AG04450 (cell line): ENCODE measurements at regions of chr6 and their contacts with region 1.

Region 1: DNA sequence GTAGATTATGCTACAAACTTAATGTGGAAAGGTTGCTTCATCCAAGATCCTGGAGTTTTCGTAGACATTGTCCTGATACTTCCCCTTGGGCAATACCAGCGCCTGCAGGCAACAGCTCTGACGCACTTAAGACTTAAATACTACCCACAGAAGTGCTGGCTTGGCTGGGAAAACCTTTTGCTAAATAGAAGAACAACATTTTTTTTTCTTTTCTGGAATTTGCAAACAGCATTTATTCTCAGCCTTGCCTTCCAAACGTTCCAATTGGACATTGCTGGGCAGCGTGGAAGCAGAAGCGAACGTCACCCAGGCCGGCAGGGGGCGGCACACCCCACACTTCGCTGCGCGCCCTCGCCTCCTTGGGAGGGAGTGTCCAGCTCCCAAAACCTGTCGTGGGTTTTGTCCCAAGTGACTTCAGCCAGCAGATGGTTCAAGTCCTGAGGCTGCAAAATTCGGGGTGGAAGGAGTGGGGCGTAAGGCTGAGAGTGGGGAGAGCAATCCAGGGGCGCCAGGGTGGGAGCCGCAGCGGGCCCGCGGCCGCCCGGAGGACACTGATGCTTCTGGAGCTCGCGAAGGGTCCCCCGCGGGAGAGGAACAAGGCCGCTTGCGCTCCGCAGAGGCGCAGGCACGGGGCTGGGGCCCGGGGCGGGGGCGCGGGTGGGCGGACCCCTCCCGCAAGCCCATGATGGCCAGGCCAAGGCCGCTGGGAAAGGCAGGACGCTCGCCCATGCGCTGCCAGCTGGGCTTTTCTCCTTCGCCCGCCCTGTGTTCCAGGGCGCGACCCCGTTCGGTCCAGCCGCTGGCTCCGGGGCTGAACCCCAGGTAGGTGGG is 60.8 kb upstream of the MAP3K4 start:
- DNase-seq: peak; percentile 52
- H3K4me3 ChIP-seq: peak overlapping the region; percentile 54
- H3K27ac ChIP-seq: no peak overlapping the region
- H3K27me3 ChIP-seq: no peaks in the 10 kb centered on the region
- CTCF ChIP-seq: peak; percentile 82

Region 2: DNA sequence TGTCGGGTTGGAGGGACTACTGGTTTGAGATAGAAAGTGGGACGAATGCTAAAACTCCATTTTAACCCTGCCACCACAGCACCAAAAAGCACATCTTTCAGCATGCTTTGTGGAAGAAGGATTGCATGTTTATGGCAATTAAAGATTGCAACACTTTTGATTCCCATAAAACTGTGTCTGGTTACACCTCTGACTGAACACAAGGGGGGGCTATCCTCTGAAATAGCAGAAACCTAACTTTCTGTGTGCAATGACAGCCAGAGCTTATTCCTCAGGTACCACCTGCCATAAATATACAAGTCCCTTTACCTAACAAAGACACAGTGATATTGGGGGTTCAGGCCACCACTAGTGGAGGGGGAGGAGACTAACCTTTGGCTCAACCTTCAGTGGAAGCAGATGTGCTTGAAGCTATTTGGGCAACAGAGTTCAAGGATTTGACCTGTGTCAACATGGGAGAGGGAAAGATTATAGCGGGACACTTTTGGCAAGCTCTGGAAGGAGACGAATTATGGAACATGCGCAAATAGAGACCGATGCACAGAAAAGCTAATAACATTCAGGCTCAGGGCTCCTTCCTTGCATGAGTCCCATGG is 238.3 kb before region 1 on chr6:
- CTCF ChIA-PET with region 1: no interaction called
- POLR2A ChIA-PET with region 1: no interaction called
- DNase-seq: no peak
- H3K4me3 ChIP-seq: no peak overlapping the region
- H3K27ac ChIP-seq: no peak overlapping the region
- H3K27me3 ChIP-seq: no peaks in the 10 kb centered on the region
- CTCF ChIP-seq: no peak

Region 3: DNA sequence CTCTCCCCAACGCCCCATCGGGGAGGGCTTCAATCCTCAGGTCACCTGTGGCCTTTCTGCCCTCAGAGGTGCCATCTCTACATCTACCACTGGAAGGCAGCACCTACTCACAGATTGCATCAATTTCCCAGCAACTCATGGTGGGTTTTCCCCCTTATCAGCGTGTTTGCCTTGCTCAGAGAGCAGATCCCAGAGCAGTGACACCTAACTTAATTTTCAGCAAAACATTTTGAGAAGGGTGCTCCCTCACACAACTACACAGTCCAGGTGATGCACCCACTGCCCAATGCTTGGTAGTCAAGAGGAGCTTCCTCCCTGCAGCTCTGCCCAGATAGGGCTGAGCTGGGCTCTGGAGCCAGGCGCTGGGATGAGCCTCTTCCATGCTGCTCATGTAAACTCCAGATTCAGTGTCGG is 180.5 kb before region 1 on chr6:
- CTCF ChIA-PET with region 1: no interaction called
- POLR2A ChIA-PET with region 1: no interaction called
- DNase-seq: no peak
- H3K4me3 ChIP-seq: no peak overlapping the region
- H3K27ac ChIP-seq: no peak overlapping the region
- H3K27me3 ChIP-seq: no peaks in the 10 kb centered on the region
- CTCF ChIP-seq: no peak

Region 4: DNA sequence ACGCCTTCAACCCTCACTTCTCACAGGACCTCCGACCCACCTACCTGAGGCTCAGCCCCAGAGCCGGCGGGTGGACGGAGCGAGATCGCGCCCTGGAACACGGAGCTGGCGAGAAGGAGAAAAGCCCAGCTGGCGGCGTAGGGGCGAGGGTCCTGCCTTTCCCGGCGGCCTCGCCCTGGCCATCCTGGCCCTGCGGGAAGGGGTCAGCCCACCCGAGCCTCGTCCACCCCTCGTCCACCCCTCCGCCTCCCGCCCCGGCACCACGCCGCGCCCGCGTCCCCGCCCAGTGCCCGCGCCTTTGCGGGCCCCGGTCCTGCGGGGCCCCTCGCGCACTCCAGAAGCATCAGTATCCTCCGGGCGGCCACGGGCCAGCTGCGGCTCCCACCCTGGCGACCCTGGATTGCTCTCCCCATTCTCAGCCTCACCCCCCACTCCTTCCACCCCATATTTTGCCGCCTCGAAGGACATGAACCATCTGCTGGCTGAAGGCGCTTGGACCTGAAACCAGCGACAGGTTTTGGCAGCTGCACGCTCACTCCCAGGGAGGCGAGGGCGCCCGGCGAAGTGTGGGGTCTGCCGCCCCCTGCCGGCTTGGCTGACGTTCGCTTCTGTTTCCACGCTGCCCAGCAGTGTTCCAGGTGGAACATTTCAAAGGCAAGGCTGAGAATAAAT is 163.6 kb before region 1 on chr6:
- CTCF ChIA-PET with region 1: no interaction called
- POLR2A ChIA-PET with region 1: no interaction called
- DNase-seq: no peak
- H3K4me3 ChIP-seq: 0 out of 2 replicates have a peak overlapping the region, but pooled peaks have one; percentile 13
- H3K27ac ChIP-seq: no peak overlapping the region
- H3K27me3 ChIP-seq: no peaks in the 10 kb centered on the region
- CTCF ChIP-seq: peak; percentile 48

Region 5: GRCh38 chr6:160831739-160832138 is 99.0 kb before region 1 on chr6:
- CTCF ChIA-PET with region 1: no interaction called
- POLR2A ChIA-PET with region 1: no interaction called
- DNase-seq: no peak
- H3K4me3 ChIP-seq: no peak overlapping the region
- H3K27ac ChIP-seq: no peak overlapping the region
- H3K27me3 ChIP-seq: no peaks in the 10 kb centered on the region
- CTCF ChIP-seq: no peak

Region 6: GRCh38 chr6:160943997-160944396 is 13.2 kb after region 1 on chr6:
- CTCF ChIA-PET with region 1: interaction called, 18 read pairs
- POLR2A ChIA-PET with region 1: no interaction called
- DNase-seq: no peak
- H3K4me3 ChIP-seq: no peak overlapping the region
- H3K27ac ChIP-seq: no peak overlapping the region
- H3K27me3 ChIP-seq: peaks cover 7% of the 10 kb centered on the region
- CTCF ChIP-seq: no peak

Region 7: DNA sequence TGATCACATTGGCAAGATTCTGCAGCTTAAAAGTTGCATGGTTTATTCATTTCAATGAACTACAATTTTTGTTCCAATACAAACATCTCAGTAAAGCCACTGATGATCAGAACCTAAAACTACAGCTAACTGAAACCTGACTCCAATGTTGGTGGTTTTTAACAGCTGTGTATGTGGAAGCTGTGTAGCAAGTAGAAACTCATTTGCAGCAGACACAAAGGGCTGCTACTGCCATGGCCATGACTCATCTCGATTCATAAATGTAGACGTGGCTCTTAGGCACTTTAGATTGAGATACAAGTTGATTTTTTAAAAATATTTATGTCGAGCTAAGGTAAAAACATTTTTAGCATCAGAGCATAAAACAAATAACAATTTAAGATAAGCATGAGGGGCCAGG is 41.3 kb after region 1 on chr6:
- CTCF ChIA-PET with region 1: interaction called, 16 read pairs
- POLR2A ChIA-PET with region 1: interaction called, 4 read pairs
- DNase-seq: peak; percentile 90
- H3K4me3 ChIP-seq: no peak overlapping the region
- H3K27ac ChIP-seq: peak overlapping the region; percentile 89
- H3K27me3 ChIP-seq: no peaks in the 10 kb centered on the region
- CTCF ChIP-seq: no peak

Region 8: DNA sequence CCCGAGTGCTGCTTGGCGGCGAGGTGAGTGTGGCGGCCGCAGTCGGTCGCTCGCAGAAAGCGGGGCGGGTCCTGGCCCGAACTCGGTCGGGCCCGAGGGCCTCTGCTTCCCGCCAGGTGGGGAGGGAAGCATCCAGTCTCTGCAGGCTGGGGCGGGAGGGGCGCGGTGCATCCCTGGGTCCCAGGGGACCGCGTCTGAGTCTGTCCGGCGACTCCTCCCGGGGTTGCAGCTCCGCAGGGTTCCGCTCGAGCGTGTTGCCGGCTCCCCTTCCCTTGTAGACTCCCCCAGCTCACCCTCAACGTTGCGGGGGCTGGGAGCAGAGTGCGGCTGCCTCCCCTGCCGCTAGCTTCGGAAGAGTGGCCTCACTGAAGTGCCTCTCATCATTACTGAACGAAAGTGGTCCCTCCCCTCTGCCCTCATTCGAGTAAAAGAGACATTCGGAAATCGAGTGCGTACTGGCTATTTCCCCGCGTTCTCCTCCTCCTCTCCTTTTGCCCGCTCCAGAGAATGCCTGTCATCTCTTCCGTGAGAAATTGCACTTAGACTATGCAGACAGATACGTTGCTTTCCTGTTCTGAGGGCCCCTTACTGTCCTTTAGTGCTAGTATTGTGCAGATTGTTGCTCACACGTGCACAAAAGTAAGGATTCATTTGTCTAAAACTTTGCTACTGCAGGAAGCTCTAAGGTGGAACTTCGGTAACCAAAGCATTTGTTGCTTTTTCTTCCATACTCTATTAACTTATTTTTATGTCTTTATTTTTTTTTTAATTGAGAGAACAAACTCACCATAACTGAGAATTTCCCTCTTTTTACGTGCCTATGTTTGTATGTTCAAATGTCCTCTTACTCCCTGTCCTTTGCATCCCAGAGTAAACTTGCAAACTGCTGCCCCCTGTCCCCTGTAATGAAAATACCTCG is 61.6 kb after region 1 on chr6:
- CTCF ChIA-PET with region 1: interaction called, 79 read pairs
- POLR2A ChIA-PET with region 1: interaction called, 4 read pairs
- DNase-seq: no peak
- H3K4me3 ChIP-seq: peak overlapping the region; percentile 84
- H3K27ac ChIP-seq: peak overlapping the region; percentile 75
- H3K27me3 ChIP-seq: no peaks in the 10 kb centered on the region
- CTCF ChIP-seq: peak; percentile 84

Region 9: GRCh38 chr6:161038229-161039031 is 107.7 kb after region 1 on chr6:
- CTCF ChIA-PET with region 1: interaction called, 17 read pairs
- POLR2A ChIA-PET with region 1: no interaction called
- DNase-seq: peak; percentile 70
- H3K4me3 ChIP-seq: no peak overlapping the region
- H3K27ac ChIP-seq: peak overlapping the region; percentile 87
- H3K27me3 ChIP-seq: no peaks in the 10 kb centered on the region
- CTCF ChIP-seq: peak; percentile 48

Region 10: DNA sequence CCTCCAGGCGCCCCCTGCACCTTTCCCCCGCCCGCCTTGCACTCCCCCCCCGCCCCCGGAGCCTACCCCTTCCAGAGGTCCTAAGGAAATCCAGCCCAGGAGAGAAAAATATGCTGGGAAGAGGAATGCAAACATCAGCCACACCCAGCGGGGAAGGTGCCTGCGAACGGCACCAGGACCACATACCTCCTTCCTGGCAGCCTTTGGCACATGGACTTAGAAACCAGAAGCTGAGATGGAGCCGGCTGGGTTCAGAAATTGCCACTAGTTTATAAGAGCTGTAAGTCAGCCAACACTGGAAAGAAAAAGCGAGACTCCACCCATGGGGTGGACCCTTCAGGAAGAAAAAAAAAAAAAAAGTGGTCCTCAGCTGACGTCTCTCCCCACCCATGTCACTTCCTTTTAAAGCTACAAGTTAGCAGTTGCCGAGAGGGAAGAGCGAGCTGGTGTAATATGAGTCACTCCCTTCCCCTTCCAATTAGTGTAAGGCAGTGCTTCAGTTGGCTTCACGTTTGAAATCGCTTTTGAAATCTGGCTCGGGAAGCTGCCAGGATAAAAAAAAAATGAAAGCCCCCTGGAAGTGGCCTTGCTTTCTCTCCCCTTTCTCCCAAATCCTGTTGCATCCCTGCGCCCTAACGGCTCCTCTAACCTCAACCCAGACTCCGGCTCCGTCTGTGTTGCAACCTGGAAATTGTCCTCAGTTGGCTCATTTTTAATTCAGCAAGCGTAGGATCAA is 343.2 kb after region 1 on chr6 and contains the start of gene AGPAT4:
- CTCF ChIA-PET with region 1: interaction called, 11 read pairs
- POLR2A ChIA-PET with region 1: no interaction called
- DNase-seq: peak; percentile 95
- H3K4me3 ChIP-seq: peak within 1 kb of the TSS; percentile 84
- H3K27ac ChIP-seq: peak within 1 kb of the TSS; percentile 80
- H3K27me3 ChIP-seq: no peaks in the 10 kb centered on the region
- CTCF ChIP-seq: no peak
- polyA plus RNA-seq, gene AGPAT4: 7.8 and 10.0 TPM in 2 replicates